ENCODE measurements at regions of chr10 and their contacts with region 1.

Region 1: DNA sequence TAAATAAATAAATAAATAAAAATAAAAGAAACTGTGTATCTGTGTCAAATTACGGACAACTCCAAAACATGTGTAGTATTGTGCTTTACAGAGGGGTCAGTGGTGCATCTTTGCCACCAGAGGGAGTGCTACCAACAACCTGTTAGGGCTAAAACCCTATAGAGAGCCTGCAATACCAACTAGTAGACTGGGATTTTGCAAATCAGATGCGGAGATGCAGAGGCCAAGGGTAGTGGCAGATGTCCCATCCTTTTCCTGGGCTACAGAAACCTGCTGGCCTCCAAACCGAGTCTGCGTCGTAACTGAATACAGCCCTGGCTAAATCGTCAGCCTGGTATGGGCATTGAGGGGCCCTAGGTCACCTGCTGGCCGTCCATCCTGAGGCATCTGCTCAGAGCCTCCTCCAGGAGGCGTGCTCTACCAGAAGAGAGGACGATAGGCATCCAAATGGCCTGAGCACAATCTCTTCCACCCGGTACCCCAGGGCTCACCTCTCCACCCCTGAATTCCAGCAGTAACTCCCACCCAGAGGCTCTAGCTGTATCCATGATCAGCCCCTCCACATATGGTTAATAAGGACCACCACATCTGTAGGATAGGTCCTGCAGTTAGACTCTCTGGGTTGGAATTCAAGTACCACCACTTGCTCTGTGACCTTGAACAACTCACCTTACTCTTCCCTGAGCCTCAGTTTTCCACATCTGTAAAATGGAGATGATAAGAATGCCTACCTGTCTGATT is 6.2 kb upstream of the RRP12 start:
- DNase-seq: peak; percentile 80
- ATAC-seq: peak; percentile 95
- H3K4me3 Mint-ChIP-seq: peak overlapping the region; percentile 59
- H3K27ac Mint-ChIP-seq: peak overlapping the region; percentile 79
- H3K4me1 Mint-ChIP-seq: peaks cover 19% of the 10 kb centered on the region
- H3K27me3 Mint-ChIP-seq: no peaks in the 10 kb centered on the region

Region 2: GRCh38 chr10:97376413-97376812 is 31.0 kb before region 1 on chr10:
- CTCF ChIA-PET with region 1: no interaction called
- DNase-seq: no peak
- ATAC-seq: no peak
- H3K4me3 Mint-ChIP-seq: no peak overlapping the region
- H3K27ac Mint-ChIP-seq: no peak overlapping the region
- H3K4me1 Mint-ChIP-seq: no peaks in the 10 kb centered on the region
- H3K27me3 Mint-ChIP-seq: no peaks in the 10 kb centered on the region

Region 3: GRCh38 chr10:97425964-97426775 is 18.8 kb after region 1 on chr10 and contains the start of gene PGAM1:
- CTCF ChIA-PET with region 1: interaction called, 122 read pairs
- DNase-seq: peak; percentile 97
- ATAC-seq: peak; percentile 85
- H3K4me3 Mint-ChIP-seq: peak within 1 kb of the TSS; percentile 87
- H3K27ac Mint-ChIP-seq: peak within 1 kb of the TSS; percentile 93
- H3K4me1 Mint-ChIP-seq: peaks cover 46% of the 10 kb centered on the region
- H3K27me3 Mint-ChIP-seq: no peaks in the 10 kb centered on the region
- total RNA-seq, gene PGAM1: 459 to 582 TPM

Region 4: DNA sequence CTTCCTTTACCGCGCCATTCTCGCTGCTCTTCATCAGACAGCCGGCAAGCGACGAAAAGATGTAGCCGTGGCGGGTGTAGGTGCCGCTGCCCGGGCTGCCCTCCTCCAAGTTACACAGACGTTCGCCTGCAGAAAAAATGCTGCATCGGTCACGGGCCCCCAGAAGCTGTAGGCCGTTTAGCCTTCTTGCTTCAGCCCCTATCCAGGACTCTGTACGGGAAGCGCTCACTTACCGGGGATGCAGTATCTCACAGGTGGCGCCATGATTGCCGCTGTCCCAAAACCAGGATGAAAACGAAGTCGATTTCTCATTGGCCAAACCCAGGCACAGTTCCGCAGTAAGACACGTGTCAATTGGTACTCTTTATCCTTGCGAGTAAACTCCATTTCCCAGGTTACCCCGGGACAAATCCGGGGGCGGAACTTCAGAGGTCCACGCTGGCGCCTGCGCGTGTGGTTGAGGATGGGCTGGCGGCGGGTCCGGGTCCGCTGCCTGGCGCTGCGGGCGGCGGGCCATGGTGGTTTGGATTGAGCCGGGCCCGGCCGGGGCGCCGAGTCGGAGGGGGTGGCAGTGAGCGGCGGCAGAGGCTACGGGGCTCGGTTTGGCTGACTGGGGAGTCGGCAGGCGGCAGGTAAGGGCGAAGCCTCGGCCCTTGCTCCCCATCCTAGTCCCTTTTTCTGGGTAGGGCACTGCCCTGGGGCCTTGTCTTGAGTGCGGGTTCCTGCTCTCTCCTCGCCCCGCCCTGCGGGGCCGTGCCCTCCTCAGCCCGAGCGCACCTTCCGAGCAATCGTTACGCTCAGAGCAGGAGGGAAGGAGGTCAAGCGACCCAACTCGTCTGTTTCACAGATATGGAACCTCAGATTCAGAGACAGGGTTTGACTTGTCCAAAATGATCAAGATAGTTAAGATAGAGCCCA is 38.6 kb after region 1 on chr10 and contains the starts of genes EXOSC1 and ZDHHC16:
- CTCF ChIA-PET with region 1: interaction called, 29 read pairs
- DNase-seq: peak; percentile 96
- ATAC-seq: peak; percentile 98
- H3K4me3 Mint-ChIP-seq: peak within 1 kb of the TSS; percentile 95
- H3K27ac Mint-ChIP-seq: peak within 1 kb of the TSS; percentile 83
- H3K4me1 Mint-ChIP-seq: peaks cover 50% of the 10 kb centered on the region
- H3K27me3 Mint-ChIP-seq: no peaks in the 10 kb centered on the region
- total RNA-seq, gene EXOSC1: 49.5 to 56.8 TPM
- total RNA-seq, gene ZDHHC16: 33.1 to 42.4 TPM

Region 5: GRCh38 chr10:97553575-97554031 is 146.2 kb after region 1 on chr10:
- CTCF ChIA-PET with region 1: interaction called, 36 read pairs
- DNase-seq: peak; percentile 66
- ATAC-seq: peak; percentile 98
- H3K4me3 Mint-ChIP-seq: no peak overlapping the region
- H3K27ac Mint-ChIP-seq: no peak overlapping the region
- H3K4me1 Mint-ChIP-seq: peaks cover 1% of the 10 kb centered on the region
- H3K27me3 Mint-ChIP-seq: peaks cover 3% of the 10 kb centered on the region

Region 6: GRCh38 chr10:97566339-97566996 is 159.1 kb after region 1 on chr10:
- CTCF ChIA-PET with region 1: no interaction called
- DNase-seq: peak; percentile 51
- ATAC-seq: peak; percentile 30
- H3K4me3 Mint-ChIP-seq: no peak overlapping the region
- H3K27ac Mint-ChIP-seq: no peak overlapping the region
- H3K4me1 Mint-ChIP-seq: peaks cover 6% of the 10 kb centered on the region
- H3K27me3 Mint-ChIP-seq: peaks cover 5% of the 10 kb centered on the region

Measured in activated CD8-positive, alpha-beta memory T cell treated with anti-CD3 and anti-CD28 coated beads, Interleukin-2, amount 10 ng/mL, durations not matched to agents 7 days and 5 days (primary cell).